ENCODE measurements at regions of chr12 and their contacts with region 1.

Region 1: DNA sequence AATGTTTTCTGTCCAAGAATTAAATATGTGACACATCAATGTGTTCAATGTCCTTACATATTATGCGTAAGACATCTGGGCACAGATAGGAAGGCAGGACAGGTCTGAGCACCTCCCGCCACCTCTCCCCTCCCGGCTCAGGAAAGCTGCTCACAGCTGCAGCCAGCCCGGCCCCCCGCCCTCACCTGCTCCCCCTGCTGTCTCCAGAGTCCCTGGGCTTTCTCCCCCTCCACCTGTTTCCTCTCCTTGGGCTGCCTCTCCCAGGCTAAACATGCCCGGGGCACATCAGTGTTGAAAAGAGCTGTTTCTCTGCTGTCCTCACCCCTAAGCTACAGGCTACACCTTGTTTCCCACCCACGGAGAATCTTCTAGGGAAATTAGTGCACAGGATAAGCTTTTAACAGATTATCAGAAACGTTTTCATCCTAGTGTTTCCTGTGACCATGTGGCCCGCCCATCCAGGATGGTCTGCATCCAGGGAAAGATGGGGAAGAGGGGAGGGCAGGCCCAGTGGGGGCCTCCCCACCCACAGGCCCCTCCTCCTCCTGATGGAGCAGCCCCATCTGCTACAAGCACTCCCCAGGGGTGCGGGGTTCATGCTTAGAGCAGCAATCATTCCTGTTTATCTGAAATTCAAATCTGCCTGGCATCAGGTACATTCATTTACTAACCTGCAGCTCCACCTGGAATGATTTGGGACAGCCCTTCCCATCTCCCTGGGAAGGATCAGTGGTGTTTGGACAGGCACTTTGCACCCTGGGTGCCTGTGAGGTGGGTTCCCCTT is 273.8 kb upstream of the SFSWAP start:
- DNase-seq: peak in 1 of 2 donors; percentile 31
- H3K4me3 ChIP-seq: no peak overlapping the region
- H3K27ac ChIP-seq: no peak overlapping the region
- H3K4me1 ChIP-seq: no peaks in the 10 kb centered on the region
- H3K27me3 ChIP-seq: peaks cover 0 to 28% of the 10 kb centered on the region in 2 donors
- CTCF ChIP-seq: no peak
- POLR2A ChIP-seq: no peak

Region 2: DNA sequence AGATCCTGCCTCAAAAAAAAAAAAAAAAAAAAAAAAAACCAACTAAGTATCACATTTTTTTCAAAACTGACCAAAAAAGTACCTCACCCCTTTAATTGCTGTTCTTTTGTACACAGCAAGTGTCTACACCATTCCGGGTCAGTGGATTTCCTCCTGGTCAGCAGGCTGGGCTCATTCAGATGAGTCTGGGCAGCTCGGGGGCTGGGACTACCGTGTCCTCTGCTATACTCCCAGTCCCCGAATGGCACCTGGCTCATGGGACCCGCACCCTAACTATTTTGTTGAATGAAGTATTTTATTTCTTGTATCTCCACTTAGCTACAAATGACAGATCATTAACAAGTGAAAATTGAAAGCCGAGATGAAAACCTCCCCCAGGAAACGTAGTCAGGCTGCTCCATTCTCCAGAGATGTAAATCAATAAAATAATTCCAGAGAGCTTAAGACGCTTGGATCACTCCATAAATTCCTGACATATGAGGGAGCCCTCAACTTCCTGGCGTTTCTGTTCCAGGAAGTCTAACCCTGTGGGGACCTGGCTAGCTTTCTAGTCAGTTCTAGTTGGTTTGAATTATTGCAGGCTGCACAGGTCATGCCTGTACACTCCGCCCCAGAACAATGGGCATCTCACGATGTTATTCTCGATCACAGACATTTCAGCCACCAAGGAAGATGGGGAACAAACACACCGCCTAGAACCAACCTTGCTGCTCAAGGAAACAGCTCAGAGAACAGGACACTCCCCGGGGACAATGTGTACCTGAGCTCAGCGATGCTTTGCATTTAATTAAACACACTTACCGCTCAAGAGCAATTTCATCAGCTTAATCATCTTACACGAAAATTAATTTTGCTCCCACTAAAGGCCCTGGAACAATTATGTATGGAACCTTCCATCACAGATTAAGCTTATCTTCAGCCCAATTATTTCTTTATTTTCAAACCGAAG is 797.4 kb before region 1 on chr12:
- intact Hi-C with region 1: no loop called
- DNase-seq: peak in 1 of 2 donors; percentile 15
- H3K4me3 ChIP-seq: no peak overlapping the region
- H3K27ac ChIP-seq: no peak overlapping the region
- H3K4me1 ChIP-seq: no peaks in the 10 kb centered on the region
- H3K27me3 ChIP-seq: no peaks in the 10 kb centered on the region
- CTCF ChIP-seq: no peak
- POLR2A ChIP-seq: no peak

Region 3: DNA sequence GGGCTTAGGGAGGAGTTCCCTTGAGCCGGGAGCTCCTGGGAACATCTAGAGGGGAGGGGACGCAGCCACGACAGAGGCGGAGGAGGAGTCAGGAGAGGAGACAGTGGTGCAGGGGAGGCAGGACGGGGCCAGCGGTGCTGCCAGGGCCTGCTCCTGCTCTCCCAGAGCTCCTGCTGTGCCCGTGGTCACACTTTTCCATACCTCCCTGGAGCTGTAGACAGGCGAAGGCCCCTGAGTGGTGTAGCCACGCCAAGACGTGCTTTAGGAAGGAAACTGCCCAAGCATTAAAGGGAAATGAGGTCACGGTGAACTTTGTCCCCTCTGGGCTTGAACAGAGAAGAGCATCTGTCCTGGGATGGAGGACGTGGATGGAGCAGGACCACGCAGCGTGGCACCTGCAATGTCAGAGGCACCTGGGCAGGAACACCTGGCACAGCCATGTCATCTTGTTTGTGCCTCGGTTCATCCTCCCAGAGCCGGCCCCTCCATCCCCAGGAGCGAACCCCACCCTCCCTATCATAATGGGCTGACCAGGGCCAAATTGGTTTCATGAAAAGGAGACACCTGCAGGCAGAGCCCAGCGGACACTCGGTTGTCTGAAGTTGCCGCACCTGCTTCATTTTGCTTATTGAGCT is 34.3 kb after region 1 on chr12:
- intact Hi-C with region 1: loop called (anchors 2 kb)
- DNase-seq: peak in 1 of 2 donors; percentile 1
- H3K4me3 ChIP-seq: no peak overlapping the region
- H3K27ac ChIP-seq: no peak overlapping the region
- H3K4me1 ChIP-seq: no peaks in the 10 kb centered on the region
- H3K27me3 ChIP-seq: peaks cover 0 to 34% of the 10 kb centered on the region in 2 donors
- CTCF ChIP-seq: no peak
- POLR2A ChIP-seq: no peak

Region 4: DNA sequence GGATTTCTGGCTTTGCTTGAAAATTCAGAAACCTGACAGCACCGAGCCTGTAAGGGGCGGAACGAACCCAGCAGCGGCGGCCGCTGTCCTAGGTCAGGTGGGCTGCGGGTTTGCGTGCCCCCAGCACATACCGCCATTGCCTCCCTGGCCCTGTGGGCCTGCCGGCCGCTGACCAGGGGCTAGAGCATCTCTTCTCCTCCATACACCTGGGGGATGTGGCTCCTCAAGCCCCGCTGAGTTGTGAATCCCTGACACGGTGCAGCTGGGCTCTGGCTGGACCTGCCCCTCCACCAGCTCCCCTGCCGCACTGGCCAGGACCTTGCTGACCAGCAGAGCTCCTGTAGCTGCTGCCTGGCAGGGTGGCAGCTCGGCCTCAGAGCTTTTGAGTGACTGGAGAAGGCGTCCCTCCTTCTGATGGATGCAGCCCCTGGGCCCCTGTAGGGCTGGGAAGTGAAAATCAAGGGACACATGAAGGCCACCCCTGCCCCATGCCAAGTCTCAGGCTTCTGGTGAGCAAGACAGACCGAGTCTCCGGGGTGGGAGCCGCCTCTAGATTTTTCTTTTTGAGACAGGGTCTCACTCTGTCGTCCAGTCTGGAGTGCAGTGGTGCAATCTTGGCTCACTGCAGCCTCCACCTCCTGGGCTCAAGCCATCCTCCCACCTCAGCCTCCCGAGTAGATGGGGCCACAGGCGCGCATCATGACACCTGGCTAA is 88.8 kb after region 1 on chr12:
- intact Hi-C with region 1: no loop called
- DNase-seq: no peak
- H3K4me3 ChIP-seq: no peak overlapping the region
- H3K27ac ChIP-seq: no peak overlapping the region
- H3K4me1 ChIP-seq: no peaks in the 10 kb centered on the region
- H3K27me3 ChIP-seq: peaks cover 0 to 28% of the 10 kb centered on the region in 2 donors
- CTCF ChIP-seq: no peak
- POLR2A ChIP-seq: no peak